HEK293 (cell line): ENCODE measurements at regions of chr14 and their contacts with region 1.

Region 1: GRCh38 chr14:99982537-99983250 is 82.5 kb upstream of the EVL start:
- H3K4me3 ChIP-seq: no peak overlapping the region
- H3K27ac ChIP-seq: no peak overlapping the region
- H3K4me1 ChIP-seq: peaks cover 32% of the 10 kb centered on the region
- CTCF ChIP-seq: peak; percentile 64; the same call in 1 of the 2 replicates

Region 2: GRCh38 chr14:99955826-99956455 is 26.8 kb before region 1 on chr14:
- CTCF ChIA-PET with region 1: no interaction called
- POLR2A ChIA-PET with region 1: no interaction called
- H3K4me3 ChIP-seq: no peak overlapping the region
- H3K27ac ChIP-seq: no peak overlapping the region
- H3K4me1 ChIP-seq: no peaks in the 10 kb centered on the region
- CTCF ChIP-seq: no peak

Region 3: DNA sequence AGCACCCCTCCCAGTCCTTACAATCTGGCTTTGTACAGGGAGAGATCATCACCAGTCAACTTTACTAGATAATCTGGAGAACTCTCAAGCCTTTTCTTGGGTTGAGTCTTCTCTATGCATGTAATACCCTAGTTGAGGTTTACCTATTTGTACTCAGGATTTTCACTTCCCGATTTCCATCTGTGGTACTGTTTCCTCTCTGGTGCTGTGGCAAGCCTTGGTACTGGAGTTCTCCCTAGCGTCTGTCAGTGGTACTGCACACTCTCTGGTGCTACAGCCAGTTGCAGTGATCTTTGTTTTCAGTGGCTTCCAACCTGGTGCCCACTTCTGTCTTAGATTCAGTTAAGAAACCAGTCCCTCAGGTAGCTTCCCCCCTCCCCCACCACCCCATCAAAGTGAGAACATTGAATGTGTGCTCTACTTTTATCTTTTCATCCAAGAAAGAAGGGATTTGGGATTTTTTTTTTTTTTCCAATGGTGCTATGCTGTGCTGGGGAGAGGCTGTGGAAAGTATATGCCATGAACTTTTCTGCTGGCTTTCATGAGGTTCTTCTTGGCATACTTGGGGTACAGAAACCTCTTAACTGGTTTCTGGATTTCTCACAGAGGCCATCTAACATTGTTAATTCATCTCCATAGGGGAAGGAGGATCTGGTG is 13.1 kb after region 1 on chr14:
- CTCF ChIA-PET with region 1: interaction called, 14 read pairs
- POLR2A ChIA-PET with region 1: no interaction called
- H3K4me3 ChIP-seq: no peak overlapping the region
- H3K27ac ChIP-seq: no peak overlapping the region
- H3K4me1 ChIP-seq: no peaks in the 10 kb centered on the region
- CTCF ChIP-seq: peak; percentile 56

Region 4: DNA sequence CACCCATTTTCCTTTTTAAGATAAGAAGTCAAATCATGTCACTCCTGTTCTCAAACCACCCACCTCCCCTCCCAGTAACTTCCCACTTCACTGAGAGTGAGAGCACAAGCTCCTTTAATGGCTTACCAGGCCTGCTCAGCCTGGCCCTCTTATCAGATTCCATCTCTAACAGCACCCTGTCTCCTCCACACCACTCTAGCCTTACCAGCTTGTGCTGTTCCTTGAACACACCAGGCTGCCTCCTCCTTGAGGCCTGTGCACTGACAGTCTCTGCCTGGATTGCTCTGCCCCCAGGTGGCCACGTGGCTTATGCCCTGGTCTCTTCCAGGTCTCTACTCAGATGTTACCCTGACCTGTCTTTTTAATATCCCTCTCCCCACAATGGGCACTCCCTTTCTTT is 42.4 kb after region 1 on chr14:
- CTCF ChIA-PET with region 1: interaction called, 24 read pairs
- POLR2A ChIA-PET with region 1: no interaction called
- H3K4me3 ChIP-seq: no peak overlapping the region
- H3K27ac ChIP-seq: no peak overlapping the region
- H3K4me1 ChIP-seq: peaks cover 16% of the 10 kb centered on the region; the same call in 1 of the 2 replicates
- CTCF ChIP-seq: peak; percentile 90; the same call in 1 of the 2 replicates

Region 5: GRCh38 chr14:100031536-100032281 is 49.0 kb after region 1 on chr14:
- CTCF ChIA-PET with region 1: interaction called, 24 read pairs
- POLR2A ChIA-PET with region 1: no interaction called
- H3K4me3 ChIP-seq: peak overlapping the region; percentile 12; the same call in 1 of the 2 replicates
- H3K27ac ChIP-seq: no peak overlapping the region
- H3K4me1 ChIP-seq: peaks cover 36% of the 10 kb centered on the region
- CTCF ChIP-seq: no peak; the same call in 1 of the 2 replicates

Region 6: DNA sequence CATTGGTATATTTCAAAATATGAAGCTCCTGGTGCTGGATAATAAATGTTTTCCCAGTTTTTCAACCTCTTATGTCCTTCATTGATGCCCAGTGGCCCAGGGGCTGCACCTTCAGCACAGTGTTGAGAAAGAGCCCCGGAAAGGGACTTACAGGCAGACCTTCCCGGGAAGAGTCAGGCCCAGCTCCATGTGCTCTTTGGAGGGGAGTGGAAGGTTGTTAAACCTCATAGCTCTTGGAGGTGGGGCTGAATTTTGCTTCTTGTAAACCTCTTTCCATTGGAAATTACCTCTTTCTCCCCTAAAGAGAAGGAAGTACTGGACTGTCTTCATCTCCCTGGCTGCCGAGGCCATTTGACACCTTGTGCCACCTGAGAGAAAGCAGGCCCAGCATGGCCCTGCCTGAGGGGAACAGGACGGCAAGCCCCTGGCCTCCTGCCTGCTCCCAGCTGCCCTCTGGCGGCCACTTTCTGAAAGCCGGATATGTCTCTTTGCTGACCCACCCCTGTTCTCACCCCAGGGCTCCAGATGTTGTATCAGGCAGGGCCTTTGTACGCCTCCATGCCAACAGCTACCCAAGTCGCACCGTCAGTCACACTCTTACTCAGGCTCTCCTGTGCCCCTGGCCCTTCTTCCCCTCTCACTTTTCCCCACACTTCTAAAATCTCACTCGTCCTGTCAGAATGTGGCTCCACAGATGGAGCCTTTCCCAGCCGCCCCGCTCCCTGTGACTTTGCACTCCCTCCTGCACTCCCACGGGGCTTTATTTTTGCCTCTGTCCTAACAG is 125.5 kb after region 1 on chr14:
- CTCF ChIA-PET with region 1: interaction called, 62 read pairs
- POLR2A ChIA-PET with region 1: no interaction called
- H3K4me3 ChIP-seq: no peak overlapping the region
- H3K27ac ChIP-seq: no peak overlapping the region
- H3K4me1 ChIP-seq: peaks cover 10% of the 10 kb centered on the region
- CTCF ChIP-seq: peak; percentile 92

Region 7: DNA sequence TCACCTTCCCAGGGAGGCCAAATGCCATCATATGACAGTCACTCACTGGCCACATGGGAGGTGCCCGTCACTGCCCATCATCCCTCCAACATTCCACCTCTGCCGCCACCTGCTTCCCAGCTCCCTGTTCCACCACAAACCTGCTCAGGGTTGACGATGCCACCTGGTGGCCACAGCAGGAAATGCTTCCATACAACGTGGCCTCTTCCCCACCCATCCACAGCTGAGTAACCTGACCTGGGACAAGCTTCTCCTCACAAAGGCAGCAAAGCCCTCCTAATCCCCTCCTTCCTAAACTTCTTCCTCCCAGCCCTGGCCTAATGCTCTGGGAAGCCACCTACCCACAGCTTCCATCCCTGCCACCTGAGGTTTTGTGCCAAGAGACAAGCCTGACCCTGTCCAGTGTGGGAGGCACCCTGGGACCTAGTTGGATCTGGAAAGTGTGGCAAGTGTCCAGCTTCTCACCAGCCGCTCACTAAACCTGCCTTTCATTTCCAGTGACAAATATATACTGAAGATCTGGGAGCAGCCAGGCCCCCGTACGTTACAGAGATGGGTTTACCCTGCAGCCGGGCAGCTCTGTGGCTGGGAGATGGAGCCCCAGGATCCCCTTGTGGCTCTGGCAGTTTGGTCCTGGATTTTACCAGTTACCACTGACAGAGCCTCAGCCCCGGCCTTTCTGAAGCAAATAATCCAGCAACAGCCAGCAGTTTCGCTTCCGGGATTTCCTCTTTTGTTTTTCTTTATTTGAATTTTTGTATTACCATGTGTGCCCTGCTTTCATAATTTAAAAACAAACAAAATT is 172.6 kb after region 1 on chr14:
- CTCF ChIA-PET with region 1: interaction called, 25 read pairs
- POLR2A ChIA-PET with region 1: no interaction called
- H3K4me3 ChIP-seq: no peak overlapping the region
- H3K27ac ChIP-seq: no peak overlapping the region
- H3K4me1 ChIP-seq: 0 out of 2 replicates have a peak, but pooled peaks cover 2% of the 10 kb centered on the region
- CTCF ChIP-seq: peak; percentile 88

Region 8: DNA sequence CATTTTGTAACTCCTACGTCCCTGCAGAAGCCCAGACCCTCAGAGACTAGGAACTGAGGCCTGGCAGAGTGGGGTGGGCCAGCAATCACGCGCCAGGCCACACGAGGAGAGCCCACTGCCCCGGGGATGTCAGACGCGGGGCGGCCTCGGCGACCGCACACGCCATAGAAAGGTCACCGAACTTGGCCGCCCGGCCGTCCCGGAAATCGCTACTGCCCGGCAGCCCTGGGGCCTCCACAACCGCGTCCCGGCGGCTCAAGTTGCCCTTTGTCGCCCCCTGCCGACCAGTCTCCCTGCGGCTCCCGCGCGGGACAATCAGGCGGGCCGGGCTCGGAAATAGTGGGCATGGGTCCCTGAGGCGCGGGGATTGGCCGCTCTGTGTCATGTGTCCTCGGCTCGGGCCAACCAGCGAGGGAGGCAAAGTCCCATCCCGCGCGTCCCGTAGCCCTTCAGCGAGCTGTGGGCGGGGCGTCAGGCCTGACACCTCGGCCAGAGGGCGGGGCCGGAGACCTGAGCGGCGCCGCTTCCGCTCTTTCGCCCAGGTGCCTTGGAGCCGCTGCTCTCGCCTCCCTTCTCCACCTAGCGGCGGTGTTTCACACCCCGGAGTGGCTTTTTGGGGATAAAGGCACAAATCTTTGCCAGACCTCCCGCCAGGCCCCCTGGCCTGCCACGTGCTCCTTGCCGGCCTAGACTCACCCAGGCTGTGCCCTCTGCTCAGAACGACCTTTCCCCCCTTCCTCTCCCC is 210.2 kb after region 1 on chr14:
- CTCF ChIA-PET with region 1: interaction called, 16 read pairs
- POLR2A ChIA-PET with region 1: no interaction called
- H3K4me3 ChIP-seq: peak overlapping the region; percentile 38
- H3K27ac ChIP-seq: peak overlapping the region; percentile 82
- H3K4me1 ChIP-seq: peaks cover 8% of the 10 kb centered on the region
- CTCF ChIP-seq: peak; percentile 97

Region 9: DNA sequence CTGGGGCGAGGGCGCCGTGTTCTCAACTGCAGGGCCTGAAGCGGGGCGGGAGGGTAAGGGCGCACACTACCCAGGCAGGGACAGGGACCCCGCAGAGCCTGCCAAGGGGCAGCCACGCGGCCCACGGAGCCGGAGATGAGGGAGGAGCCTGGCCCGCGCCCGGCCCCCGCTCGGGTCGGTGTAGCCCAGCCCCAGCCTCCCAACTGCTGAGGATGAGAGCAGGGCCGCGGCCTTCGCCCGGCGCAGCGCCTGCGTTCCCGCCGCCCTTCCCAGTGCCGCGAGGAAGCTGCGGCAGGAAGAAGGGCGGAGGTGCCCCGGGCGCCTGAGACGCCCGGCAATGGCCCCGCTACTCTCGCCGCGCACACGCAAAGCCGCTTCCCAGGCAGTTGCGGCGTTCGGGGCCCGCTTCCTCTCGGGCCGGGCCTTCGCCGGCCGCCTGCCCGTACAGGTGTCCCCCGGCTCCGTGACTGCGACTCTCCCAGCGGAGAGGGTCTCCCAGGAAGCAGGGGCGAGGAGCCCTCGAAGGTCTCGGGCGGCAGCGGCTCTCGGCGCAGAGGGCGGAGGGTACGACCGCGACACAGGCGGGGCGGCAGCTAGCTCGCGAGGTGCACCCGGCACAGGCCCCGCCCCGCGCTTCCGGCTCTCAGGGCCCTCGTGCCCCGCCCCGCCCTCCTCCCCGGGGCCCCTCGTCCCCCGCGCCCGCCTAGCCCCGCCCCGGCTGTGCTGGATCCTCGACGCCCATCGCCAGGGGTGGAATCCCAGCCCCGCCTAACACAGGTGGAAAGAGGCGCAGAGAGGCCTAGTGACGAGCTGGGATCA is 231.5 kb after region 1 on chr14:
- CTCF ChIA-PET with region 1: no interaction called
- POLR2A ChIA-PET with region 1: no interaction called
- H3K4me3 ChIP-seq: peak overlapping the region; percentile 74
- H3K27ac ChIP-seq: peak overlapping the region; percentile 89
- H3K4me1 ChIP-seq: peaks cover 4% of the 10 kb centered on the region; the same call in 1 of the 2 replicates
- CTCF ChIP-seq: no peak